B cell (primary cell): ENCODE measurements at regions of chr19 and their contacts with region 1.

Region 1: DNA sequence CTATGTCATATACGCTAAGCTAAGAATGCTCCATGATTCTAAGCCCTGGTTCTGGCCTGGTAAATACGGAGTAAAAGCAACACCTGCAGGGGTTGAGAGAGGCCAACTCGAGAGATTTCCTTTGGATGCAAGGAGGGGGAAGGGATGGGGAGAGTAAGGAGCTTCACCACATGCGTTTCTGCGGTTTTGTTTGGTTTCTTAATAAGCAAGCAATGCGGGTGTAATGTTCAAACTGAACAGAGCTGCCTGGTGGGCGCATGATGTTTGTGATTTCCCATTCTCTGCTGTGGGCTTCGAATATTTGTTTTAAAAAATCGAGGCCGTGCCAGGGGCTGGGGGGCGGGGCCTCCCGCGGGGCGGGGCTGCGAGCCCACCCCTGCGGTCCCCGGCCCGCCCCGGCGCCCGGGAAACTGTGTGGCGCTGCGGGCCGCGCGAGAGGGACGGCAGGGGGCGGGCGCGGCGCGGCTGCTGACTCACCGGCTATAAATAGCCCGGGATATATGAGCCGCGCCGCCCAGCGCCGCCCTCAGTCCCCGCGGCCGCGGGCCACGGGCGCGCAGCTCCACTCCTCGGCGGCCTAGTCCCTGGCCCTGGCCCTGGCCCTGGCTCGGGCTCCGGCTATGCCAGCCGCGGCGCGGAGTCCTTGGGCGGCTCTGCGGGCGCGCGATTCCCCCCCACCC is 5.1 kb downstream of the BBC3 start:
- DNase-seq: peak; percentile 93
- ATAC-seq: peak; percentile 62
- H3K4me3 ChIP-seq: peak overlapping the region in 4 of 5 experiments; percentile 42 to 95 (median 56)
- H3K4me3 Mint-ChIP-seq: peak overlapping the region; percentile 90
- H3K27ac ChIP-seq: peak overlapping the region; percentile 82 to 93
- H3K27ac Mint-ChIP-seq: peak overlapping the region; percentile 95
- H3K4me1 ChIP-seq: peaks cover 41 to 46% of the 10 kb centered on the region in 2 donors
- H3K4me1 Mint-ChIP-seq: peaks cover 15% of the 10 kb centered on the region
- H3K27me3 ChIP-seq: peaks cover 0 to 31% (median 1%) of the 10 kb centered on the region in 4 experiments
- H3K27me3 Mint-ChIP-seq: no peaks in the 10 kb centered on the region
- CTCF ChIP-seq: peak; percentile 50

Region 2: GRCh38 chr19:46529622-46530462 is 696.0 kb before region 1 on chr19:
- CTCF ChIA-PET with region 1: no interaction called
- POLR2A ChIA-PET with region 1: no interaction called
- intact Hi-C with region 1: no loop called
- DNase-seq: peak; percentile 81
- ATAC-seq: peak; percentile 67
- H3K4me3 ChIP-seq: no peak overlapping the region
- H3K4me3 Mint-ChIP-seq: no peak overlapping the region
- H3K27ac ChIP-seq: no peak overlapping the region
- H3K27ac Mint-ChIP-seq: no peak overlapping the region
- H3K4me1 ChIP-seq: peaks cover 0 to 10% of the 10 kb centered on the region in 2 donors
- H3K4me1 Mint-ChIP-seq: peaks cover 10% of the 10 kb centered on the region
- H3K27me3 ChIP-seq: peaks cover 0 to 15% (median 3%) of the 10 kb centered on the region in 4 experiments
- H3K27me3 Mint-ChIP-seq: peaks cover 8% of the 10 kb centered on the region
- CTCF ChIP-seq: peak; percentile 98

Region 3: DNA sequence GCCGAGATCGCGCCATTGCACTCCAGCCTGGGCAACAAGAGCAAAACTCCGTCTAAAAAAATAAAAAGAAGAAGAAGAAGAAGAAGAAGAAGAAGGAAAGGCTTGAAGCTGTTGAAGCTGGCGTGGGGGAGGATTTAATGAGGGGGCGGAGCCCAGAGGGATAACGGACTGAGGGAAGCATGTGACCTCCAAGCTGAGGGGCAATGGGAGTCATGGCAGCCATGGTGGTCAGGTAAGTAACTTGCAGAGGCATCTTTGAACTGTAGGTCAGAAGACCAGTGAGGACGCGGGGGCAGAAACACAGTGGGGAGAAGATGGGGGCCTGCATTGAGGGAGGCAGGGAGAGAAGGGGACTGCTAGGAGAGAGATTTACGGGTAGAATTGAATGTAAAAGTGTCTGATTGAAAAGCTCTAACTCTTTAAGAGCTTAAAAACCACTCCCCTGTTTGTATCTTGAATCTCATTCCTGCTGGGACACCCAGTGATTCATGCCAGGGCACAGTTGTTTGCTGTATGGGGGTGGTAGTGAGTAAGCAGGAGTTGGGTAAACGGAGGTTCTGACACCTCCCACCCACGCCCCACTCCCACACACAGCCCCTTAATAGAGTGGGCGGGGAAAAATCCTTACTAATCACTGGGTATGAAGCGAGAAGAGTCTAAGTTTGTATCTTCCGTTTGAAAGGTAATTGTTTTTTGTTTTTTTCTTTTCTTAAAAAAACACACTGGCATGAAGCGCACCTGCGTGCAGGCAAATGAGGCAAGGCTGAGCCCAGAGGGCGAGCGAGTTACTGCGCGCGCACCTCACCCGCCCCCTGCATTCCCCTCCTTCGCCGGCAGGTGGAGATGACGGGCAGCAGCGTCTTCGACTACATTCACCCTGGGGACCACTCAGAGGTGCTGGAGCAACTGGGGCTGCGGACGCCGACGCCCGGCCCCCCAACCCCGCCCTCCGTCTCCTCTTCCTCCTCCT is 190.5 kb before region 1 on chr19:
- CTCF ChIA-PET with region 1: no interaction called
- POLR2A ChIA-PET with region 1: no interaction called
- intact Hi-C with region 1: loop called (anchors 5 kb)
- DNase-seq: peak; percentile 97
- ATAC-seq: peak; percentile 98
- H3K4me3 ChIP-seq: peak overlapping the region; percentile 36 to 69 (median 56)
- H3K4me3 Mint-ChIP-seq: peak overlapping the region; percentile 93
- H3K27ac ChIP-seq: no peak overlapping the region
- H3K27ac Mint-ChIP-seq: peak overlapping the region; percentile 80
- H3K4me1 ChIP-seq: peaks cover 18 to 19% of the 10 kb centered on the region in 2 donors
- H3K4me1 Mint-ChIP-seq: peaks cover 20% of the 10 kb centered on the region
- H3K27me3 ChIP-seq: peaks cover 0 to 20% (median 1%) of the 10 kb centered on the region in 4 experiments
- H3K27me3 Mint-ChIP-seq: peaks cover 13% of the 10 kb centered on the region
- CTCF ChIP-seq: peak; percentile 97

Region 4: GRCh38 chr19:47186446-47187334 is 39.2 kb before region 1 on chr19:
- CTCF ChIA-PET with region 1: interaction called, 5 read pairs
- POLR2A ChIA-PET with region 1: interaction called, 11 read pairs
- intact Hi-C with region 1: no loop called
- DNase-seq: peak; percentile 45
- ATAC-seq: peak; percentile 78
- H3K4me3 ChIP-seq: peak overlapping the region in 1 of 5 experiments; percentile 14
- H3K4me3 Mint-ChIP-seq: peak overlapping the region; percentile 72
- H3K27ac ChIP-seq: peak overlapping the region; percentile 41 to 62
- H3K27ac Mint-ChIP-seq: peak overlapping the region; percentile 89
- H3K4me1 ChIP-seq: peaks cover 3 to 12% of the 10 kb centered on the region in 2 donors
- H3K4me1 Mint-ChIP-seq: peaks cover 19% of the 10 kb centered on the region
- H3K27me3 ChIP-seq: no peaks in the 10 kb centered on the region
- H3K27me3 Mint-ChIP-seq: no peaks in the 10 kb centered on the region
- CTCF ChIP-seq: no peak

Region 5: DNA sequence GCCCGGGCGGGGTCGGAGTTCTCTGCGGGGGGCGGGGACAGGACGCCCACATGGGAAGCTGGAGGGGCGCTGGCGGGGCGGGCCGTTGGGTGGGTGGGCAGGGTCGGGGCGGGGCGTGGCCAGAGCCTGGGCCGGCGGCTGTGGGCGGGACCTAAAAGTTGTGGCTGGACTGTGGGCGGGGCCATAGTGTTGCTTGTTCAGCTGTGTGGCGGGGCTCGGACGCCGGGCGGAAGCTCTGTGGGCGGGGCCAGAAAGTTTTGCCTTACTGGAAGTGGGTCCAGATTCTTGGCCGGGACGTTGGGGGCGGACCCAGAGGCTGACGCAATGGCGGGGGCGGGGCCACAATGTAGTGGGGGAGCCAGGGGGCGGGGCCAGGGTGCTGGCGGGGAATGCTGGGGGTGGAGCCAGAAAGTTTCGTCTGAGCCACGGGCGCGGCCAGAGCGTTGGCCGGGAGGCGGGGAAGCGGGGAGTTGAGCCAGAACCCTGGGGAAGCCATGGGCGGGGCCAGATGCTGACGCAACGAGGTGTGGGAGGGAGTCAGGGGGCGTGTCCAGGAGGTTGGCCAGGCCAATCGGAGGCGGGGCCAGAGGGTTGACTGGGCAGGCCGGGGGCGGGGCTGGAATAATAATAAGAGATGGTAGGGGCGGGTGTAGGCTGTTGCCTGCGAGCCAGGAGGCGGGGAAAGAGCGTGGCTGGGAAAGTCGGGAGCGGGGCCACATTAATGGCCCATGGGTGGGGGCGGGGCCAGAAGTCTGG is 31.0 kb after region 1 on chr19:
- CTCF ChIA-PET with region 1: no interaction called
- POLR2A ChIA-PET with region 1: interaction called, 37 read pairs
- intact Hi-C with region 1: loop called (anchors 1 kb)
- DNase-seq: peak; percentile 98
- ATAC-seq: peak; percentile 77
- H3K4me3 ChIP-seq: peak overlapping the region; percentile 38 to 71 (median 62)
- H3K4me3 Mint-ChIP-seq: peak overlapping the region; percentile 92
- H3K27ac ChIP-seq: peak overlapping the region; percentile 73 to 94
- H3K27ac Mint-ChIP-seq: peak overlapping the region; percentile 95
- H3K4me1 ChIP-seq: peaks cover 14 to 20% of the 10 kb centered on the region in 2 donors
- H3K4me1 Mint-ChIP-seq: peaks cover 40% of the 10 kb centered on the region
- H3K27me3 ChIP-seq: no peaks in the 10 kb centered on the region
- H3K27me3 Mint-ChIP-seq: no peaks in the 10 kb centered on the region
- CTCF ChIP-seq: no peak

Region 6: DNA sequence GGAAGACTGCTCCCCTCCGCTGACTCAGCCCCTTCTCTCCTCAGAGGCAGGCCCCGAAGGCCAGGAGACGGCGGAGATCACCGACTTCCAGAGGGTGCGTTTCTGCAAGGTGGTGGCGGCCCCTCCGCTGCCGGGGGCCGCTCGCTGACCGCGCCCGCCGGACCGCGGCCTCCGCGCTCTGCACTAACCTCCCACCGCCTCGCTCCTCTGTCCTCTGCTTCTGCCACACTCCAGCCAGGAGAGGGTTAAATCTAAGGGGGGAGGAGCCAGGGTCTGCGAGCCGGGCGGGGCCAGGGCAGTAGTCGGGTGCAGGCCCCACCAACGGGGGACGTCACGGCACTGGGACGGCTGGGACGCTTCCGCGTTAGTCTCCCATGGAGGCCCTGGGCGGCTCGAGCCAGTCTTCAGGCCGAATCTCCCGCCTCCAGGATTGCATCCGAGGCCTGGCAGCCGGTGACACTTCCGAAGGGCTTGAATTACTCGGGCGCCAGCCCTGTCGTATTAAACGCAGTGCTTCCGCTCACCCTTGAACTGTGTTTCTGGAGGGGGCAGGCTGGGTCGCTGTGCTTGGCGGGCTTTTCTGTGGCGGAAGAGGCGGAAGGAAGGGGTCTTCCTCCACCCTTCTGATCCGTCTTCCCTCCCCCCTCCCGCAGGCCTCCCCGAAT is 47.6 kb after region 1 on chr19:
- CTCF ChIA-PET with region 1: interaction called, 3 read pairs
- POLR2A ChIA-PET with region 1: interaction called, 14 read pairs
- intact Hi-C with region 1: loop called (anchors 2 kb)
- DNase-seq: peak; percentile 91
- ATAC-seq: peak; percentile 56
- H3K4me3 ChIP-seq: peak overlapping the region; percentile 54 to 99 (median 96)
- H3K4me3 Mint-ChIP-seq: peak overlapping the region; percentile 97
- H3K27ac ChIP-seq: peak overlapping the region; percentile 94 to 98
- H3K27ac Mint-ChIP-seq: peak overlapping the region; percentile 99
- H3K4me1 ChIP-seq: peaks cover 12 to 22% of the 10 kb centered on the region in 2 donors
- H3K4me1 Mint-ChIP-seq: peaks cover 22% of the 10 kb centered on the region
- H3K27me3 ChIP-seq: no peaks in the 10 kb centered on the region
- H3K27me3 Mint-ChIP-seq: no peaks in the 10 kb centered on the region
- CTCF ChIP-seq: no peak